ENCODE measurements at regions of chr9 and their contacts with region 1.

Region 1: DNA sequence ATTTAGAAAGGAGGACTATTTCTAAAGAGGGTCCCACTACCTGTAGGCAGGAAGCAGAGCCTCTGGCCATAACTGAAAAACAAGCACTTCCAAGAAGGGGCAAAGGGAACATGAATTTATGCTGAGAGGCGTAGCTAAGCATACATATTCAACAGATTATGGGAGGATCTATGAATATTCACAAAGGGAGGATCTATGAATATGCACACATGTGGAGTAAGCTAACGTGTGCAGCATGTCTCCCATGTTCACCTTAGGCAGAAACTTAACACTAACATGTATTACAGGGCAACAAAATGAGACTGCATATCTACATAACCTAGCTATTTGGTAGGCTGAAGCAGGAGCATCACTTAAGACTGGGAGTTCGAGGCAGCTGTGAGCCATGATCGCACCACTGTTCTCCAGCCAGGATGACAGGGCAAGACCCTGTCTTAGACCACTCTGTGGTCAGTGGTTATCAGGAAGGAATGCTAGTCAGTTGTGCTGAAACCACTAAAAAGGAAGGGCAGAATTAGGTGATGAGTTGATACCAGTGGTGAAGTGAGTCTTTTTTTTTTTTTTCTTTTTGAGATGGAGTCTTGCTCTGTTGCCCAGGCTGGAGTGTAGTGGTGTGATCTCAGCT is 20.8 kb downstream of the FXN start:
- DNase-seq: no peak
- H3K4me3 ChIP-seq: no peak overlapping the region
- H3K27ac ChIP-seq: no peak overlapping the region
- H3K4me1 ChIP-seq: no peaks in the 10 kb centered on the region
- CTCF ChIP-seq: no peak

Region 2: DNA sequence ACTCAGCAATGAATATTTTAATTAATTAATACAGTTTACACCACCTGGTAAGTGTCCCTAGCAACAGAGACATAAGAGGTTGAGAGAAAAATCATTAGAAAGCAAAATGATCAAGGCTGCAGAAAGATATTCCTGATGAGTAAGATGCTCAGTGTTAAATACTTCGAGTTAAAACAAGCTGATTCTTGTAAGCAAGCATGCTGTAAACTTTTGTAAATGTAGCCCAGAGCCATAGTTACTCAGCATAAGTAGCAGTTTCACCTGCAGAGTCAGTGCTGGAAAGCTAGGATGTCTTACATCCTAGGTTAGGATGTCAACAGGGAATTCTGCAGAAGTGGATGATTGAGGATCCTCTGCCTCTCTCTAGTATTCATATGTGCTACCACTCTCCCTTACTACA is 46.6 kb before region 1 on chr9:
- CTCF ChIA-PET with region 1: no interaction called
- POLR2A ChIA-PET with region 1: no interaction called
- intact Hi-C with region 1: no loop called
- DNase-seq: no peak
- H3K4me3 ChIP-seq: no peak overlapping the region
- H3K27ac ChIP-seq: no peak overlapping the region
- H3K4me1 ChIP-seq: peaks cover 10% of the 10 kb centered on the region
- CTCF ChIP-seq: no peak

Region 3: GRCh38 chr9:69121828-69122548 is 65.7 kb after region 1 on chr9:
- CTCF ChIA-PET with region 1: no interaction called
- POLR2A ChIA-PET with region 1: no interaction called
- intact Hi-C with region 1: loop called (anchors 5 kb)
- DNase-seq: peak; percentile 90
- H3K4me3 ChIP-seq: peak overlapping the region; percentile 65
- H3K27ac ChIP-seq: peak overlapping the region; percentile 60
- H3K4me1 ChIP-seq: peaks cover 19% of the 10 kb centered on the region
- CTCF ChIP-seq: peak; percentile 62

Region 4: GRCh38 chr9:69549310-69550202 is 493.3 kb after region 1 on chr9:
- CTCF ChIA-PET with region 1: no interaction called
- POLR2A ChIA-PET with region 1: no interaction called
- intact Hi-C with region 1: loop called (anchors 5 kb)
- DNase-seq: peak; percentile 35
- H3K4me3 ChIP-seq: no peak overlapping the region
- H3K27ac ChIP-seq: no peak overlapping the region
- H3K4me1 ChIP-seq: no peaks in the 10 kb centered on the region
- CTCF ChIP-seq: peak; percentile 92